T-cell (primary cell): ENCODE measurements at regions of chr19 and their contacts with region 1.

Region 1: GRCh38 chr19:48351341-48351752 is 12.4 kb downstream of the TMEM143 start:
- DNase-seq: peak; percentile 42 to 84 (median 71)
- ATAC-seq: peak; percentile 71 to 82 (median 79)
- H3K4me3 ChIP-seq: no peak overlapping the region
- H3K4me3 Mint-ChIP-seq: no peak overlapping the region
- H3K27ac ChIP-seq: no peak overlapping the region
- H3K27ac Mint-ChIP-seq: no peak overlapping the region
- H3K4me1 ChIP-seq: peaks cover 0 to 6% of the 10 kb centered on the region in 2 experiments
- H3K4me1 Mint-ChIP-seq: peaks cover 0 to 7% (median 2%) of the 10 kb centered on the region in 3 donors
- H3K27me3 ChIP-seq: no peaks in the 10 kb centered on the region
- H3K27me3 Mint-ChIP-seq: no peaks in the 10 kb centered on the region

Region 2: DNA sequence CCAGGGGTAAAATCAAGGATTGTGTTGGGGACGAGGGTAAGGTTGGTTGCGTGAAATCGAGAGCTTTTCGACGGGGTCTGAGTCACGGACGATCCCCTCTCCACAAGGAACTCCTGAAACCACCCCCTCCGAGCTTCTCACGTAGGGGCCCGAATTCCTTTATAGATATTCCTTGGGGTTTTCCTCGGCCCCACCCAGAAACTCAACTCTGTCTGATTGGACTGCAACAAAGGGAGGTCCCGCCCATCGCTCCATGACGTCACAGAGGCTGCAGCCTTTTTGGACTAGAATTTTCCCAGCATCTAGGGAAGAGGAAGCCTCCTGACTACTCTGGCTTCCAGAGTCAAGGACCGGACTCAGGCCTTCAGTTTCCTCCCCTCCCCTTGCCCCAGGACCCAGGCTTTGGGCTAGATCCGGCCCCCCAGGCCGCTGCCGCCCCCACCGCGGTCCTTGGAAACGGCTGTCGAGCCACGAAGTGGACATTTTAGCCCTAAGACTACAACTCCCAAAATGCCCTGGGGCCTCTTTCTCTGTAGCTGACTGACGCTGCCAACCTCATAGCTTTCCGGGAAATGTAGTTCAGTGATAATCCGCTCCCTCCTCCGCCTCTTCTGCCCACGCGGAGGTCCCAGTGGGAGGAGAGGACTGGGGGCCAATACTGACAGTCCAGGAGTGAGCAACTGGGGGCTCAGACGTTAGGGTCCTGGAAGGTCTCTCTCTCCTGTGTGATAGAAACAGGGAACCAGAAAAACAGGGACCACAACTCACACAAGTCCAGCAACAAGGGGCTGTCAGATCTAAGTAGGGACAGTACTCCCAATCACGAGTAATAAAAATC is 395.6 kb after region 1 on chr19 and contains the start of gene IZUMO1:
- CTCF ChIA-PET with region 1: interaction called in 1 of 2 experiments, 10 read pairs
- POLR2A ChIA-PET with region 1: no interaction called
- DNase-seq: peak in 28 of 35 experiments; percentile 22 to 70 (median 48)
- ATAC-seq: peak; percentile 70 to 82 (median 73)
- H3K4me3 ChIP-seq: peak within 1 kb of the TSS; percentile 11 to 29
- H3K4me3 Mint-ChIP-seq: peak within 1 kb of the TSS in 1 of 3 donors; percentile 3
- H3K27ac ChIP-seq: no peak within 1 kb of the TSS
- H3K27ac Mint-ChIP-seq: no peak within 1 kb of the TSS
- H3K4me1 ChIP-seq: peaks cover 0 to 22% of the 10 kb centered on the region in 2 experiments
- H3K4me1 Mint-ChIP-seq: peaks cover 9 to 21% (median 15%) of the 10 kb centered on the region in 3 donors
- H3K27me3 ChIP-seq: peaks cover 0 to 53% of the 10 kb centered on the region in 2 experiments
- H3K27me3 Mint-ChIP-seq: peaks cover 11 to 19% of the 10 kb centered on the region in 2 donors
- total RNA-seq, gene IZUMO1: not detected